ENCODE measurements at regions of chr22 and their contacts with region 1.

Region 1: GRCh38 chr22:21972293-21972779 is 10.3 kb downstream of the TOP3B start:
- DNase-seq: peak; percentile 52
- H3K4me3 Mint-ChIP-seq: no peak overlapping the region
- H3K27ac Mint-ChIP-seq: no peak overlapping the region
- H3K4me1 Mint-ChIP-seq: no peaks in the 10 kb centered on the region
- H3K27me3 Mint-ChIP-seq: no peaks in the 10 kb centered on the region

Region 2: GRCh38 chr22:21961886-21962654 is 10.3 kb before region 1 on chr22:
- CTCF ChIA-PET with region 1: interaction called, 20 read pairs
- POLR2A ChIA-PET with region 1: no interaction called
- DNase-seq: no peak
- H3K4me3 Mint-ChIP-seq: no peak overlapping the region
- H3K27ac Mint-ChIP-seq: no peak overlapping the region
- H3K4me1 Mint-ChIP-seq: no peaks in the 10 kb centered on the region
- H3K27me3 Mint-ChIP-seq: no peaks in the 10 kb centered on the region

Region 3: GRCh38 chr22:21982338-21982965 is 10.1 kb after region 1 on chr22 and contains the start of gene TOP3B:
- CTCF ChIA-PET with region 1: interaction called, 13 read pairs
- POLR2A ChIA-PET with region 1: interaction called, 3 read pairs
- DNase-seq: peak; percentile 84
- H3K4me3 Mint-ChIP-seq: peak within 1 kb of the TSS; percentile 91
- H3K27ac Mint-ChIP-seq: peak within 1 kb of the TSS; percentile 92
- H3K4me1 Mint-ChIP-seq: peaks cover 33% of the 10 kb centered on the region
- H3K27me3 Mint-ChIP-seq: no peaks in the 10 kb centered on the region
- total RNA-seq, gene TOP3B: 45.6 to 51.6 TPM

Region 4: DNA sequence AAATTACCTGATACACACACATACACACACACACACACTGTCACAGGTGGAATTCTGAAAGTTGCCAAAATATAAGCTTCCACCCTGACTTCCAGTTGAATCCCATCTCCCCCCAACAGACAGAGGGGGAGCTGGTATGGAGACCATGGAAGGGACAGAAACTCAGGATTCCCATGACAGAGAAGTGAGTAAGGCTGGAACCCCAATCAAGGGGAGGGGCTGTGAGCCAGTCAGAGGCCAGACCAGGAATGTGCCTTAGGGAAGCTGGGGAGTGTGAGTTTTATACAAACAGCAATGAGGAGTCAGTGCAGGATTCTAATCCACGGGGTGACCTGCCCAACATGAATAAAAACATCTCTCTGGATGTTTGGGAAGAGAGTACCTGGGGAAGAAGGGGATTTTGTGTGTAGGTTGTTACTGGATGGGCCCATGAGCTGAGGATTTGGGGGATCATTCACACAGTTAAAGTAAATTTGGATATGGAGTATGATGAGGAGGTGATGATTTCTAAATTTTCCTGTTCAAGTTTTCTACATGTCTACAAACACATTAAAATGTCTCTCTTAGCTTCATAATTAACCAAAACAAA is 48.9 kb after region 1 on chr22:
- CTCF ChIA-PET with region 1: no interaction called
- POLR2A ChIA-PET with region 1: no interaction called
- DNase-seq: no peak
- H3K4me3 Mint-ChIP-seq: no peak overlapping the region
- H3K27ac Mint-ChIP-seq: no peak overlapping the region
- H3K4me1 Mint-ChIP-seq: peaks cover 2% of the 10 kb centered on the region
- H3K27me3 Mint-ChIP-seq: peaks cover 8% of the 10 kb centered on the region